Right ventricle myocardium superior (tissue), 1 donor: ENCODE measurements at regions of chr21 and their contacts with region 1.

Region 1: DNA sequence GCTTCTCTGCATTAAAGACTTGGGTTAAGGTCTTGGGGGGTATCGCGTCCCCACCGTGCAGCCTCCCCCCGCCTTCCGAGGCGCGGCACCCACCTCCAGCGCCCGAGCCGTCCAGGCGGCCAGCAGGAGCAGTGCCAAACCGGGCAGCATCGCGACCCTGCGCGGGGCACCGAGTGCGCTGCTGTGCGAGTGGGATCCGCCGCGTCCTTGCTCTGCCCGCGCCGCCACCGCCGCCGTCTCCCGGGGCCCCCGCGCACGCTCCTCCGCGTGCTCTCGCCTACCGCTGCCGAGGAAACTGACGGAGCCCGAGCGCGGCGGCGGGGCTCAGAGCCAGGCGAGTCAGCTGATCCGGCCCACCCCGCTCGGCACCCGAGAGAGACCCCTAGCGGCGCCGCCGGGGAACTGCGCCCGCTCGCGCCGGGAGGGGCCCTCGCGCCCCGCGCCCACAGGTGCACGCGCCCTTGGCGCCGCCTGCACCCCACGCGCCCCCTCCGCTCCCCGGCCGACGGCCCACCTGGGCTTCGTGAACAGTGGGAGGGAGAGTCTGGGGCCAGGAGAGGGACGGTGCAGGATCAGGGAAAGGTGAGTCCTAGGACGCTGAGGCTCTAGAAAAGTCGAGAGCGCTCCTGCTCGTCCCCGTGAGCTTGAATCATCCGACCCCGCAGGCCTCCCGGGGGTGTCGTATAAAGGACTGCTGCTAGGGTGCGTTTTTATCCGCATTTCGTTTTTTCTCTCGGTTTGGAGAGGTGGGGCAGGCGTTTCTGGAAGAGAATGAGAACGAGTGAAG is at the start of gene APP:
- DNase-seq: peak; percentile 93
- ATAC-seq: peak; percentile 92
- total RNA-seq, gene APP: 292 TPM

Region 2: DNA sequence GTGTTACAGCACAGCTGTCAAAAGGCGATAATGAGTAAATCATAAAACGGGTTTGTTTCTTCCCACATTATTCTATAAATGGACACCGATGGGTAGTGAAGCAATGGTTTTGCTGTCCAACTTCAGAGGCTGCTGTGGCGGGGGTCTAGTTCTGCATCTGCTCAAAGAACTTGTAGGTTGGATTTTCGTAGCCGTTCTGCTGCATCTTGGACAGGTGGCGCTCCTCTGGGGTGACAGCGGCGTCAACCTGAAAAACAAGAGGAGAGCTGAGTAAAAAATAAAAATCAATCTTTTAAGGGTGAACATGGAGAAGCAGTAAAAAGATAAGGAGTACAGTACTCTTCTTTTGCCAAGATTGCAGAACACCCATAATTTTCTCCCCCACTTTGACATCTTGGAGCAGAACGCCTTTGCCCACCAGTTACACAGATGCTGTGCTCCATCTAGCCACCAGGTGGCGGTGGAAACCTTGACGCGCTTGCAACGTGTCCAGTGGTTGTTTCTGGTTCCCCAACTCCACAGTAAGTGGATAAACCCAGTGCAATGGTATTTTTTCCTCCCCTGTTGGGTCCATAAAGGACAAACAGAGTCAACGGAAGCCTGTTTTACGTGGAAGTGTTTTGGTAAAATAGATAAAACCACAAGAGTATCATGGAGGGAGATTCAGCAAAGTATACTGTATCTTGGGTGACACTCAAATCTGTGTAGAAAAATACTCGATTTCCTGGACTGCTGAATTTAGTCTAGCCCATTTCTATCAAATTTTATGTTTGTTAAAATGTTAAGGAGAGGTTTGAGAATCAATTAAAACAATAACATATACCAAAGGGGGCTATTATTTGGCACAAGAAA is 288.9 kb before region 1 on chr21:
- intact Hi-C with region 1: loop called (anchors 5 kb)
- DNase-seq: peak; percentile 78
- ATAC-seq: peak; percentile 89

Region 3: DNA sequence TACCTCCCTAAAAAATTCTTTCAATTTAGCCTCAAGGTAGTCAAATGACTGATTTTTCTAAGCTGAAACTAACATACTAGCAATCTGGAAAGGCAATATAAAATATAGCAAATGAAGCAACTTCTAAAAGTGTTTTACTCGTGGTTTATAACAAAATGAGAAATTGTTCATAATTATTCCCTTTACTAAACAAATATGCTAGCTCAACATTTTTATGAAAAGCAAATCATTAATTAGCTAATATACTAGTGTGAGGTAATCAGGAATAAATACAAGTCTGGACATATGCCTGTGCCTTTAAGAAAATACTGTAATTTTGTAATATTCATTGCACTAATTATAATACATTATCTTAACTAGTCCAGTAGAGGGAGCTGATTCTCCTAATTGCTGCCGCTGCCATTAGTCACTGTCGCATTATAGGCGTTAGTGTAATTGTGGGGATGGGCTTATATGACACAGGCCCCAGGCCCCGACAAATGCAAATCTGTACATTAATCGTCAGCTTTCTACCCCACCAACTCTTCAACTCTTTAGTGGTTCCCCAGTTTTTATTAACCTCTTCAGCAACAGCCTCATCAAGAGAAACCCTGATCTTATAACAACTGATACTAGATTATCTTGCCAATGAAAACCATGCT is 275.0 kb before region 1 on chr21:
- intact Hi-C with region 1: loop called (anchors 5 kb)
- DNase-seq: no peak
- ATAC-seq: peak; percentile 82

Region 4: DNA sequence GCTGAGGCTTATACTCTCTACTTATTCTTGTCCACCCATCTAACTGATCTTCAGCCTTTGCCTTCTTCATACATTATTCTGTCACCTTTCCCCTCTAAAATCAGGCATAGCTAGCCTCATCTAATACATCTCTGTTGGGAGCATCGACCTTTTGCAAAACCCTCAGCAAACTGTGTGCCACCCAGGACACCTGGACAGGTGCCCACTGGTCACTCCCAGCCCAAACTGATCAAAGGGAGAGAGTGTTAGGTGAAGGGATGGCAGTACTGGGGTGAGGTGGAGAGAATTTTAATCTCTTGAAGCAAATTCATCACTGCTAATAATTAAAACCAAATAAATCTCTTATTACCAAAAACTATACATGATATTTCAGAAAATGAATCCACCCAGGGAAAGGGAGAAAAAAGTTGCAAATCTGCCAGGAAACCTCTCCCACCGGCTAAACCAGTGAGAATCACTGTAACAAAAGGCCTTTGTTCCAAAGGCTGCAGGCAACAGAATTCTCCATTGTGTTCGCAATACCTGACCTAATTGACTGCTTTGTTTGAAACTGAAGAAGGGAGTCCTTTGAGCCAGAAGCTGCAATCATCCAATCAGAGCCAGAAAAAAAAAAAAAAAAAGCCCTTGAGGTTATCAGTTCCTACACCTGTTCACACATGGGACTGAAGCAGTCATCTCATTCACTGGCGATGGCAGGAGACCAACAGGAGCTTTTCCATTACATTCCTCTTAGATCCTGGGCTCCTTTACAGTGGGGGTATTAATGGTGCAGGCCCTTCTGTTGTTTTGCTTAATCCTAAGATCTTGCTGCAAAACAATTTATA is 172.7 kb before region 1 on chr21:
- intact Hi-C with region 1: loop called (anchors 10 kb)
- DNase-seq: no peak
- ATAC-seq: no peak